HepG2 (cell line): ENCODE measurements at regions of chr5 and their contacts with region 1.

Region 1: DNA sequence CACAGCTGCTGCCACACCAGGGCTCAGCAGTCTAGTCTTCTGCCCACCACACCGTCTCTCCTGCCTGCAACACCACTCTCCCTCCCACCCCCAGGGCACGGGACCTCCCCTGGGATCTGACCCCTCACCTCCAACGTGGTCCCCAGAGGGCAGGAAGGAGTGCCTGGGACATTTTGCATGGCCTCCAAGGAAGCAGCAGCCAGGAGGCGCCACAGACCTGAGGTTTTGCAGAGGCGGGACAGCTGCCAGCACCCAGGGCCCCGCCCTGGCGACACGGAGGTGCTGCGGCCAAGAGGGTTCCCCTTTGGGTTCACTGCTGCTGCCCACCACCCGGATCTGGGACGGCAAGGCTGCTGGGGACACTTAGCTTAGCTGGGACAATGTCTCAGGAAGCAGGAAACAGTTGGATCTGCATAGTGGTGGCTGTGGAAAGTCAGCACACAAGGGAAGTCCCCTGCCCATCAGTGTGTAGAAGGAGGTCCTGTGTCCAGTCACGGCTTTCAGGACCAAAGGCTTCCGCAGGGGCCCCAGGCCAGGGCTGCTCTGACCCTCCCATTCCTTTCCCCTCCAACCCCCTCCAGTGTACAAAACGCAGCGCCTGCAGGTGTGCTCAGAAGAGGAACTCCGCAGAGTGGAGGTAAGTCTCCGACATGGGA is 13.8 kb downstream of the PROP1 start:
- DNase-seq: peak; percentile 7
- ATAC-seq: peak; percentile 71
- H3K4me3 ChIP-seq: no peak overlapping the region
- H3K27ac ChIP-seq: no peak overlapping the region
- H3K4me1 ChIP-seq: no peaks in the 10 kb centered on the region
- H3K27me3 ChIP-seq: peaks cover 5 to 47% of the 10 kb centered on the region in 2 experiments; a peak in 4 of 5 replicates
- CTCF ChIP-seq: peak; percentile 57
- EP300 ChIP-seq: no peak
- POLR2A ChIP-seq: no peak
- RAD21 ChIP-seq: no peak

Region 2: DNA sequence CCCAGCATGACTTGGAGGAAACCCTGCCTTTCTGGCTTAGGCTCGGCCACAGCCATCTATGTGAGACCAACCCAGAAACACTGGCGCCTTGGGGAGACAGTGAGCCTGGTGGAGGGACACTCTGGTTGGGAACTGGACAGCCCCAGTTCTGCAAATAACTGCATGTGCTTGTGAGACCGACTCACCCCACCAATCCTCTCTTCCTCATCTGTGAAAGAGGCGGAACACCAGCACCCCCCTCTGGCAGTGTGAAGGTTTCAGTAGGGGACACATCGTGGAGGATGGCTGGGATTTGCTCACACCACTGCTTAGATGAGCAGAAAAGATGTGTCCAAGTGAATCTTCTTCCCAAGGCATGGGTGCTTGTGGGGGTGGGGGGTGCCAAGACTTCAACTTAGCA is 87.7 kb after region 1 on chr5:
- CTCF ChIA-PET with region 1: no interaction called
- POLR2A ChIA-PET with region 1: no interaction called
- in situ Hi-C with region 1: loop called (anchors 10 kb)
- intact Hi-C with region 1: no loop called
- DNase-seq: peak; percentile 27
- ATAC-seq: peak; percentile 71
- H3K4me3 ChIP-seq: no peak overlapping the region
- H3K27ac ChIP-seq: no peak overlapping the region
- H3K4me1 ChIP-seq: peaks cover 6% of the 10 kb centered on the region; the same call in 1 of the 2 replicates
- H3K27me3 ChIP-seq: peaks cover 6 to 13% of the 10 kb centered on the region in 2 experiments; a peak in 4 of 5 replicates
- CTCF ChIP-seq: peak; percentile 67
- EP300 ChIP-seq: no peak
- POLR2A ChIP-seq: no peak
- RAD21 ChIP-seq: no peak

Region 3: DNA sequence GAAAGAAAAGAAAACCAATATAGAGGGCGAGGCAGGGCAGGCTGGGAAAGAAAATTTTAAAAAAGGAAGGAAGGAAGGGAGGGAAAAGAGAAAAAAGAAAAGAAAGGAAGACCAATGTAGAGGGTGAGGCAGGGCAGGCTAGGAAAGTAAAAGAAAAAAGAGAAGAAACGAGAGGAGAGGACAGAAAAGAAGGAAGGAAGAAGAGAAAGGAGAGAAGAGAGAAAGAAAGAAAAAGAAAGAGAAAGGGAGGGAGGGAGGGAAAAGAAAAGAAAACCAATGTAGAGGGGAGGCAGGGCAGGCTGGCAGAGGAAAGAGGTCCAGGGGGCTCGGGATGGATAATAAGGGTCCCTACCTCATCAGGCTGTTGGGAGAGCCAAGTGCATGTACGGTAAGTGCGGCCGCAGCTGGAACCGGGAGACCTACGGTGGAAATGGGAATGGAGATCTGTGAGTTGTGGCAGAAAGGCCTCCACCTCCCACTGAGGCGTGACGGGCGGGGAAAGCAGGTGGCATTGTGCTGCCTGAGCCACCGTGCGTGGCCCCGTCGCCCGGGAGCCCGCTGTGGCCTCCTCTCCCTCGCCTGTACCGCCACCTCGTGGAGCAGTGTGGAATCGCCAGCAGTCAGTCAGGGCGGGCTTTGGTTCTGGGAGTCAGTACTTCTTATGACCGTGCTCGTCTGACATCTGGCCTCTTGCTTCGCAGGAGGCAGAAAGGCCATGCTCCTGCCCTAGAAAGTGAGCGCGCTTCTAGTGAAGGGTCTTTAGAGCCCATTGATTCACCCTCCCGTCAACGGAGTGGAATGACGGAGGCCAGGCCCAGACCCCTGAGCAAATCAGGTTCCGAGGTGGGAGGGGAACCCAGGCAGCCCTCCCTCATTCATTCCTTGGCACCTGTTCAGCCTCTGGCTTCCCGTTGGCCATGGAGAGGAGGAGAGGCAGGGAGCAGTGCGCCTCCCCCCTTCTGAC is 181.9 kb after region 1 on chr5:
- CTCF ChIA-PET with region 1: no interaction called
- POLR2A ChIA-PET with region 1: no interaction called
- in situ Hi-C with region 1: no loop called
- intact Hi-C with region 1: loop called (anchors 5 kb)
- DNase-seq: peak; percentile 58
- ATAC-seq: peak; percentile 97
- H3K4me3 ChIP-seq: peak overlapping the region in 1 of 3 experiments; percentile 40; a peak in 1 of 6 replicates
- H3K27ac ChIP-seq: no peak overlapping the region
- H3K4me1 ChIP-seq: peaks cover 9% of the 10 kb centered on the region
- H3K27me3 ChIP-seq: peaks cover 2 to 28% of the 10 kb centered on the region in 2 experiments; a peak in 4 of 5 replicates
- CTCF ChIP-seq: peak; percentile 98
- EP300 ChIP-seq: no peak
- POLR2A ChIP-seq: no peak
- RAD21 ChIP-seq: peak; percentile 95